Dorsolateral prefrontal cortex (tissue), 120 donors: ENCODE measurements at regions of chr9 and their contacts with region 1.

Region 1: DNA sequence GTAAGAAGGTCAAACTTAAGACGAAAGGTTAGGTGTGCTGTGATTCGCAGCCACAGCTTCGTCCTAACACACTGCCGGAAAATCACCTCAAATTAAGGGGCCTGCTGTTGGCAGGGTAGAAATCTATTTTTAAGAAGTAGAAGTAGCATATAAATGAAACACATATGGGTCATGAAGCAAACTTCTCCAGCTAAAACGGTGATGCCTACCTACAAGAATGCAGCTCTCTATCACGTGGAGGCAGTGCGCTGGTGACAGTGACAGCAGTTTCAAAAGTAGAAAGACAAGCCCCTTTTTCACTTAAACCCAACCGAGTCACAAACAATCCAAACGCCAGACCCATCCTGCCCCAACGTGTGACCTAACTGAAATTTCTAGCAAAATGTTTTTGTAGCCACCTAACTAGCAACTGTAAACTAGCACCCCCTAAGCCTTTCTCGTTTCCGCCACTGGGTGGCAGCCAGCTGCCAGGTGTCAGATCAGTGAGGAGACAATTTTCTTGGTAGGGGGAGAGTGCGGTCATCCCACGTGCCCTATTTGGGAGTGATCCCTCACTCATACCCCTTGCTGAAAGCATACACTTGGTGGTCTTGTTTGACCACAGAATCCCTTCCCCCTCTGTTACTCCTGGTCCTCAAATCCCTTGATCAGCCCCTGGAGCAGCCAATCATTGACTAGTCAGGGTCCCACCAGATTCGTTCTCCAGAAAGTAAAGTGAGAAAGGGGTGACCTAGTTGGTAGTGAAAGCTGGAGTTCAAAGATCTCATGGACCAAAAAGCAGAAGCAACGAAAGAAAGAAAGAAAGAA is 71.8 kb upstream of the MAMDC2 start:
- DNase-seq: peak; percentile 55 to 79 (median 68)
- H3K4me3 ChIP-seq: no peak overlapping the region
- H3K27ac ChIP-seq: no peak overlapping the region
- H3K27me3 ChIP-seq: peaks cover 0 to 3% (median 0%) of the 10 kb centered on the region in 45 donors
- CTCF ChIP-seq: peak; percentile 62 to 91 (median 81)

Region 2: DNA sequence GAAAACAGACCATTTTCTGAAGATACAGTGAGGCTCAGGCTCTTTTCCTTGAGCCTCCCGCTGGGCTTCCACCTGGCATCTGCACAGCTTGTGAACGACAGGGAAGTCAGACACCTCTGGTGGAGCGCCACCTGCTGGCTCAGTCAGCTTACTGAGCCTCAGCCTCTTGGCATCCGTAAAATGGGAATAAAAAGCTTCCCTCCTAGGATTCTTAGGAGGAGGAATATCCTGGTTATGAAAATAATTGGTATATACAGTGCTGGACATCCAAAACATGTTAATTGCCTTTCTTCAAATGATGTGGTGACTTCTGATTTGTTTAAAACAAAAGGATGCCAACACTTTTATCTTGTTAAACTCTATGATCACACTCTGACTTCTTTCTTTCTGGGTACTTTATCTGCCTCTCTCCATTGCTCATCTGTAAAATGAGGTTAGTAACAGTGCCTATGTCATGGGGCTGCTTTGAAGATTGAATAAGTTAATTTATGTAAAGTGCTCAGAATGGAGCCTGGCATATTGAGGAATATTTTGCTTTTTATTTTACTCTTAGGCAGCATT is 139.3 kb after region 1 on chr9:
- intact Hi-C with region 1: loop called (anchors 1 to 5 kb)
- DNase-seq: peak; percentile 49 to 76 (median 68)
- H3K4me3 ChIP-seq: no peak overlapping the region
- H3K27ac ChIP-seq: no peak overlapping the region
- H3K27me3 ChIP-seq: no peaks in the 10 kb centered on the region
- CTCF ChIP-seq: peak; percentile 60 to 90 (median 79)

Region 3: DNA sequence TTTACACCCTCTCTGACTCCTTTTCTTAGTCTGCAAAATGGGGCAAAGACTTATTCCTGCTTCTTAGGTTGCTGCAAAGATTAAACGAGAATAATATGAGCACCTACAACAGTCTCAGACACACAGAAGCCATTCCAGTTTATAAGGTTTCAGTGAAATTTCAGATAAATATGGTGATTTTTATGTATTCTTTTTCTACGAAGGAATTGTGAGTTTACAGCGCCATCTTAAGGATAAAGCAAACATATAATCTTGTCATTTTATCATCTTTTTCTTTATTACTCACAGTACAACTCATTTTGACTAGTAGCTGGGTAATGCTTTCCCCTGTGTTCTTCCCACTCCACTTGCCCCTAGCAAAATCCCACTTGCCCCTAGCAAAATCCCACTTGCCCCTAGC is 257.7 kb after region 1 on chr9:
- intact Hi-C with region 1: loop called in 1 of 2 experiments (anchors 2 kb)
- DNase-seq: no peak
- H3K4me3 ChIP-seq: peak overlapping the region in 1 of 59 donors; percentile 9
- H3K27ac ChIP-seq: peak overlapping the region in 1 of 59 donors; percentile 63
- H3K27me3 ChIP-seq: no peaks in the 10 kb centered on the region
- CTCF ChIP-seq: peak in 49 of 56 donors; percentile 13 to 66 (median 40)